Stomach (tissue), 19 donors: ENCODE measurements at regions of chr6 and their contacts with region 1.

Region 1: DNA sequence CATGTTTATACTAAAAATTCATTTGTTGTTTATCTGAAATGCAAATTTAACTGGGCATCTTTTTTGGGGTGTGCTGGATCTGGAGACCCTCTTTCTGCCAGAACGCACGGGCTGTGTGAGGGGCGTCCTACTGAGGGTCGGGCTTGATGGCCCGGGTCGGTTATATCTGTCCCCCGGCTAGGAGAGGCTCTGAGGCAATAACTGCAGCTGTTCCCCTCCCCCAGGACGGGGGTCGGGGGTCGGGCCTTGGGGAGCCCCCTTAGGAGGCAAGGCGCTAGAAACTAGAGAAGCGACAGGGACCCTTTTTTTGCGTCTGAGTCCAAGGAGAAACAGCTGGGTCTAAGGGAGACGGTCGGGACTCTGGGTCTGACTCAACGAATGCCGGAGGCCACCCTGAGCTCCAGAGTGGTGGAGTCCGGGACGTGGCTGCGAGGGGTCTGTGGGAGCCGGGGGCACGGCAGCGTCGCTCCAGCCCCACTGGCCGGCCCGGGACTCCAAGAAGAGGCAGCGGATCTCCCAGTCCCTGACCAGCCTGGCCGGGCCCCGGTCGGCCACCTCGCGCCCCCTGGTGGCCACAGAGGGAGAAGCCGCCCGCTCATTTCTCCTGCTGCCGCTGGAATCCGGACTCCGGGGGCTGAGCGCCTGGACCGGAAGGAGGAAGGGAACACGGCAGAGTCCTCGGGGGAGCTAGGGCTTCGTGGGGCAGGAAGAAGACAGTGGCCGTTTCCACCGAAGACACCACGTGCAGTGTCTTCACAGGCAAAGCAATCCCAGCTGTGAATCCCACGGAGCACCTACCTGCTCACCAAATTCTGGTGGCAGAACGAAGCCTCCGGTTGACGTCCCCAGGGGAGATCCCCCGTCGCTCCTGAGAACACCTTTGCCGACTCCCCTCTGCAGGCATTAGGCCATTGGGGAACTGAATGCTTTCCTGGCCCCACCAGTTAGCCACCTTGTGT is 24.0 kb upstream of the SCML4 start:
- DNase-seq: peak; percentile 90 to 95
- H3K4me3 ChIP-seq: peak overlapping the region; percentile 41 to 55 (median 50)
- H3K27ac ChIP-seq: no peak overlapping the region
- H3K4me1 ChIP-seq: peaks cover 0 to 15% (median 14%) of the 10 kb centered on the region in 4 donors
- H3K27me3 ChIP-seq: peaks cover 0 to 12% (median 4%) of the 10 kb centered on the region in 3 donors
- CTCF ChIP-seq: peak in 5 of 7 experiments; percentile 91 to 99 (median 95)
- EP300 ChIP-seq: no peak
- POLR2A ChIP-seq: no peak

Region 2: DNA sequence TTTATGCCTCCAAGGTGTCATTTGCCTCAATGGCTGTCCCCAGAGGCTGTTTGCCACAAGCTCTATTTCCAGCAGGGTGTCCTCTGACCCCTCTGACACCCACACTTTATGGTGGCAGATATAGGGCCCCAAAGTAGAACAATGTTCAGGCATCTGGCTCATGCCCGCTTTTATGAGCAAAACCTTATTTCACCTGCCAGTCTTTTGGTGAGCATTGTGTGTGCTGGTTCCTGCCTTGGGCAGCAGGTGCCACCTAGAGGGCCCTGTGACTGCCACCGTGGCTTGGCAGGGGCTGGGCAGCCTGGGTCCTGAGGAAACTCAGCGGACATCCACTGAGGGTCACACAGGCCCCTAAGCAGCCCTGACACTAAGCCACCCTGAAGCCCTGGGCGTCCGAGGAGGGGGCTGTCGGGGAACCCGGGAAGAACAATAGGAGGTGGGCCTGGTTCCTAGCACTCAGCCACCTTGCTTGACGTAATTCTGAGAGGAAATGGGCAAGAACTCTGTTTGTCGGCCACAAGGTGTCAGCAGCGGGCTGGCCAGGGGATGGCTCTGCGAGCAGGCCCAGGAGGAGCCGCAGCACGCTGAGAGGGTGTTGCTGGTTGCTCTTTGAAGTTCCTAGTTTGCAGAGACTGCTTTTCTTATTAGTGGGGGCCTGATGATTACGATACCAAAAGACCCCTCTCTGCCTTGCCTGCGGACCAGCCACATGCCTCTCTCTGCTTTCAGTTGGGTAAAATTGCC is 173.0 kb before region 1 on chr6:
- intact Hi-C with region 1: loop called (anchors 5 kb)
- DNase-seq: peak; percentile 83 to 97
- H3K4me3 ChIP-seq: peak overlapping the region; percentile 4 to 11 (median 10)
- H3K27ac ChIP-seq: peak overlapping the region; percentile 16 to 76 (median 71)
- H3K4me1 ChIP-seq: peaks cover 0 to 23% (median 15%) of the 10 kb centered on the region in 4 donors
- H3K27me3 ChIP-seq: no peaks in the 10 kb centered on the region
- CTCF ChIP-seq: peak in 5 of 7 experiments; percentile 66 to 94 (median 81)
- EP300 ChIP-seq: no peak
- POLR2A ChIP-seq: no peak